ENCODE measurements at regions of chr10 and their contacts with region 1.

Region 1: GRCh38 chr10:79249186-79250121 is 97.8 kb upstream of the PPIF start:
- DNase-seq: peak; percentile 70
- ATAC-seq: peak; percentile 28
- H3K4me3 ChIP-seq: peak overlapping the region in 2 of 5 experiments; percentile 30
- H3K4me3 Mint-ChIP-seq: peak overlapping the region; percentile 84
- H3K27ac ChIP-seq: peak overlapping the region; percentile 93 to 95
- H3K27ac Mint-ChIP-seq: peak overlapping the region; percentile 95
- H3K4me1 ChIP-seq: peaks cover 99 to 100% of the 10 kb centered on the region in 2 donors
- H3K4me1 Mint-ChIP-seq: peaks cover 99% of the 10 kb centered on the region
- H3K27me3 ChIP-seq: no peaks in the 10 kb centered on the region
- H3K27me3 Mint-ChIP-seq: no peaks in the 10 kb centered on the region
- CTCF ChIP-seq: no peak

Region 2: DNA sequence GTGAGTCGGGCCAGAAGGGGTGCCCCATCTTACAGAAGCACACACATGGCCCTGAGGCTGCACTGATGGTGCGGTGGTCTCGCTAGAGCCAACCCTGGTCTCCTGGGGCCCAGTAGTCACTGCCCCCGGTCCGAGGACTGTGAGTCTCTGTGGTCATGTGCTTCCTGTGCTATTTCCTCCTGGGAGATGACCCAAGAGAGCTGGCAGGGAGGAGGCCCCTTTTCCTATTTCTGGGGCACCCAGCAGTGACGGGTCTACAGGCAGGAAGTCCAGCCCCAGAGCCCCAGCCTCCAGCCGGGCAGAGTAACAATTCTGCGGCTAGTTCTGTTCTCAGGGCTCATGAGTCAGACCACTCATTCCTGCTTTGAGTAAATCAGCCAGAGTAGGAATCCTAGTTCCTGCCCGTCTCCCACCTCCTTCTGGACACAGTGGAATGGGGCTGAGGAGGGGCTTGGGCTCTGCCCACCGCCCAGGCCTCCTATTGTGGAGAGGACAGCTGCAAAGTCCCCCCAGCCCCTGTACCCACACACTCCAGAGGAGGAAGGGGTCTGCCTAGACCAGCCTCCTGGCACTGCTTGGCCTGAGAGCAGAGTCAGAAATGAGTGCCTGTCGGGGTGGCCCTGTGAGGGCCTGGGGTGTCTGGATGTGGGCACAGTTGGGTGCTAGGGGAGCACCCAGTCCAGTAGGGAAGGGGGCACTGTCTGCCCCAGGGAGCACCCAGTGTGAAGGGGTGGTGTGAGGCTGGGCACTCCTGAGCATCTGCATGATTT is 17.3 kb after region 1 on chr10:
- CTCF ChIA-PET with region 1: interaction called, 6 read pairs
- POLR2A ChIA-PET with region 1: interaction called, 9 read pairs
- intact Hi-C with region 1: loop called (anchors 1 kb)
- DNase-seq: no peak
- ATAC-seq: peak; percentile 61
- H3K4me3 ChIP-seq: peak overlapping the region in 3 of 5 experiments; percentile 8 to 45 (median 15)
- H3K4me3 Mint-ChIP-seq: peak overlapping the region; percentile 76
- H3K27ac ChIP-seq: peak overlapping the region; percentile 64 to 71
- H3K27ac Mint-ChIP-seq: peak overlapping the region; percentile 91
- H3K4me1 ChIP-seq: peaks cover 62 to 95% of the 10 kb centered on the region in 2 donors
- H3K4me1 Mint-ChIP-seq: peaks cover 95% of the 10 kb centered on the region
- H3K27me3 ChIP-seq: no peaks in the 10 kb centered on the region
- H3K27me3 Mint-ChIP-seq: no peaks in the 10 kb centered on the region
- CTCF ChIP-seq: no peak

Region 3: DNA sequence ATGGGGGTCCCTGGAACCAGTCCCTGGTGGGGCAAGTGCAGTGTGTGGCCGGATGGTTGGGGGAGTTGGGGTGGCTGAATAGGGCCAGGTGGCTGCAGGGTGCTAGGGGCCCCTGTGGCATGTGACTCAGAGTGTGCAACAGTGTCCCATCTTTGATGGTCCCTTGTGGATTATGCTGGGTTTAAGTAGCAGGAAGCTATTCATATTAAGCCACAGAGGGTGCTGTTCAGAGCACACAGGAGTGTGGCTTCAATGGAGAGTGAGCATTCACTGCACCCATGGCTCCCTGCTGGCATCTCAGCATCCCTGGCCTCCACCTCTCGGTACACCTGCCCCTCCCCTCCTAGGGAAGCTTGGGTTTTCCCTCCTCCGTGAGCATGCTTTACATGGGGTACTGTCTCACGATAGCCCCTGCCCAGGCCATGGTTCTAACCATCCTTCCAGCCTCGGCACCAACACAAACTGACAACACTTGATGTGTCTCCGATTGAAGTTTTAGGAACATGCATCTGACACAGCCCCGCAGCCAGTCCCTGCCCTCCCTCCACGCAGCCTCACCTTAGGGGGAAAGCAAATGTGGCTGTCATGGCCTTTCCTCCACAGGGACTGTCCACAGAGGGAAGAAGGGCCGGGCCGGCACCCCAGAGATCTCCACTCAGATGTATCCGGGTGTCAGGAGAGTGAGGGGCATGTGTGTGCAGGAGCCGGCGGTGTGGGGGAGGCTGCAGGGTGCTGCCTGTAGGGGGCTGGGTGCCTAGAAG is 67.4 kb after region 1 on chr10:
- CTCF ChIA-PET with region 1: interaction called, 4 read pairs
- POLR2A ChIA-PET with region 1: interaction called, 3 read pairs
- intact Hi-C with region 1: loop called (anchors 2 kb)
- DNase-seq: peak; percentile 33
- ATAC-seq: peak; percentile 78
- H3K4me3 ChIP-seq: no peak overlapping the region
- H3K4me3 Mint-ChIP-seq: peak overlapping the region; percentile 73
- H3K27ac ChIP-seq: no peak overlapping the region
- H3K27ac Mint-ChIP-seq: peak overlapping the region; percentile 51
- H3K4me1 ChIP-seq: peaks cover 17 to 21% of the 10 kb centered on the region in 2 donors
- H3K4me1 Mint-ChIP-seq: peaks cover 33% of the 10 kb centered on the region
- H3K27me3 ChIP-seq: no peaks in the 10 kb centered on the region
- H3K27me3 Mint-ChIP-seq: no peaks in the 10 kb centered on the region
- CTCF ChIP-seq: no peak